Adrenal gland (tissue), 19 donors: ENCODE measurements at regions of chr3 and their contacts with region 1.

Region 1: GRCh38 chr3:56702490-56703315 is 19.6 kb upstream of the TASOR start:
- DNase-seq: peak in 6 of 7 donors; percentile 40 to 76 (median 60)
- H3K4me3 ChIP-seq: no peak overlapping the region
- H3K27ac ChIP-seq: no peak overlapping the region
- H3K4me1 ChIP-seq: peaks cover 0 to 4% of the 10 kb centered on the region in 2 donors
- H3K27me3 ChIP-seq: no peaks in the 10 kb centered on the region
- CTCF ChIP-seq: peak; percentile 83 to 95 (median 90)
- POLR2A ChIP-seq: no peak

Region 2: GRCh38 chr3:56988458-56989168 is 285.9 kb after region 1 on chr3:
- intact Hi-C with region 1: loop called (anchors 2 to 5 kb)
- DNase-seq: peak; percentile 76 to 94 (median 84)
- H3K4me3 ChIP-seq: no peak overlapping the region
- H3K27ac ChIP-seq: no peak overlapping the region
- H3K4me1 ChIP-seq: peaks cover 0 to 8% of the 10 kb centered on the region in 2 donors
- H3K27me3 ChIP-seq: no peaks in the 10 kb centered on the region
- CTCF ChIP-seq: peak; percentile 80 to 95 (median 86)
- POLR2A ChIP-seq: no peak